Cardiac septum (tissue), 1 donor: ENCODE measurements at regions of chr3 and their contacts with region 1.

Region 1: GRCh38 chr3:48188266-48189201 is at the start of gene CDC25A:
- DNase-seq: peak; percentile 98
- total RNA-seq, gene CDC25A: 0.32 TPM

Region 2: DNA sequence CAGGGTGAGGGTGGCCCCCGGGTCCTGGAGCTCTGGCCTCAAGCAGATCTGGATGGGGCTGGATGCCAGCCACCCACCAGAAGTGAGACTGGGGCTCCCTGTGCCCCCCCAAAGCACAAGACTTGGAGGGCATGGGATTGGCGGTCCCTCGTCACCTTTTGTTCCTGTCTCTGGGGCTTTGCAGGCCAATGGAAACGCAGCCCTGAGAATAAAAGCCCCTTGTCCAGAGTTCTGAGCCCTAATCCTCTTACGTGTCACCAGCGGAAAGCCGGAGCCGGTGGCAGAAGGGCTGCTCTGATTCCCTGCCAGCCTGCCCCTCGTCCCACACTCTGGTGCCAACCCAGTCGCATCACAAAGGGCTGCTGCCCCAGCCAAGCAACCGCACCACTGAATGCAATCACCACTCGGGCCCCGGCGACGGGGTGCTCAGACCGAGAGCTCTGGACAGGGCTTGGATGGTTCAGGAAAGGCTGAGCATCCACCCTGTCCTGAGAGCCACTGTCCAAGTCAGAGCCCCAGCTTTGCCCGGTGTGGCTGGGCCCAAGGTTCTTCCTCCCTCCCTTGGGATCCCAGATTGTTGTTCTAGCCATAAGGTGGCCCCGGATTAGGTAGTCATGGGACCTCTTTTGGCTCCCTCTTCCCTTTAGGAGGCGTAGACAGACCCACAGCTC is 652.2 kb before region 1 on chr3:
- intact Hi-C with region 1: no loop called
- DNase-seq: no peak

Region 3: DNA sequence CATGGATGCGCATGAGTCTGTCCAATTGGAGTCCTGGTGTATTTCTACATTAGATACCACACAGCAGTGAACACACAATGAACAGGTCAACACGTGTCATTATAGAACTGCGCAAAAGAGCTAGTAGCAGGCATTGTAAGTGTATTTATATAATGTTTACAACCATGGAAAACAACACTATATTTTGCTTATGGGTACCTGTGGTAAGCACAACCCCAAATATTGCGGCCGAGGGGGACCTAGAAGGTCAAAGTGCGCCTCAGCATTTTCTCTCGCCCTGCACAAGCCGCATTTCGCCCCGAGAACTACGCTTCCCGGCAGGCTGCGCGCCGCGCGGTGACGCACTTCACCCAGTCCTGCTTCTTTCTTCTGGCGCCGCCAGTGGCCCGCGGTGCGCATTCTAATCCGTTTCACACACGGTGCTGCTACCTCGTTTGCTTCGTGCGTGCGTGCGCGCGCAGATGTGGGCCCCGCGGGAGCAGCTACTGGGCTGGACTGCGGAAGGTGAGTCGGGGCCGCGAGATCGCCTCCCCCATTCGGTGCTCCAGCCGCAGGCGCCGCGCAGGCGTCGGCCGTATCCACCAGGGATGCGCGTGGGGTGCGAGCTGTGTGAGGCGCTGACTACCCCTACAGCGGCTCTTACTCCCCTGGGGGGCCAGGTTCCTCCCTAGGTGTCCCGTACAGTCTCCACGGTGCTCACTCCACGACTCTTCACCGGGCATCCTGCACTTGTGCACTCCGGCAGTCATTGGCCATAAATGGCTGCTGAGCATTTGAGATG is 52.4 kb after region 1 on chr3 and contains the start of gene ZNF589:
- intact Hi-C with region 1: no loop called
- DNase-seq: peak; percentile 96
- total RNA-seq, gene ZNF589: 3.4 TPM

Region 4: DNA sequence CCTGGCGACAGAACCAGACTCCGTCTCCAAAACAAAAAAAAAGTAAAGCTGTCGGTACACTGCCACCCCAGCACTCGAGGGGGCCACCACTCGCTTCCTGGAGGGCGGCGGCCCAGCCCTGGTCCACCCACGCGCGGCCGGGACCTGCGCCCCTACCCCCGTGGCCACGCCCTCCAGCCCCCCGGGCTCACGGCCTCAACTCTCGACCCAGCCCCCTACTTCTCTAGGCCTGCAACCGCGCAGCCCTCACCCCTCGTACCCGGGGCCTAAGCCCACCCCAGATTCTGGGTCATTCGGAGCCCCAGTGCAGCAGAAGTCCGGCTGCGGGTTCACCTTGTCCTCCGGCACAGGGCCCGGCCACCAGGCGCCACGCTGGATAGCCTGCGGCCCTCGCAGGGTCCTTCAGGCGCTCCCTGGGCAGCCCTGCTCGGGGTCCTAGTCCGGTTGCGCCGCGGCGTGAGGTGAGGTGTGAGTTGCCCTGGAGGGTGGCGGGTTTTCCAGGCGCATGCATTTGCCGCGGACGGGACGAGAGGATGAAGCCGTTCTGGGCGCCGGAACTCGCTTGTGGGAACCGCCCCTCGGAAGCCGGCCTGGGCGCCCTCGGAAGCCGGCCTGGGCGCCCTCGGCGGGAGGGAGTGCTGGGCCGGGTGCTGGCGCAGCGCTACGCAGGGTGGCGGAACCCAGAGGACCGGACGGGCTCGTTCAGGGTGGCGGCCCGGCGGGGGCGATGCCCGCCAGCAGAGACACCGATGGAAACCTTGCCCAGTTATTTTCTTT is 112.7 kb after region 1 on chr3:
- intact Hi-C with region 1: loop called (anchors 5 kb)
- DNase-seq: peak; percentile 98